ENCODE measurements at regions of chr1 and their contacts with region 1.

Region 1: GRCh38 chr1:21517161-21517589 is 8.0 kb downstream of the ALPL start:
- DNase-seq: no peak
- H3K4me3 ChIP-seq: no peak overlapping the region
- H3K27ac ChIP-seq: no peak overlapping the region
- H3K4me1 ChIP-seq: peaks cover 0 to 5% of the 10 kb centered on the region in 2 donors
- H3K27me3 ChIP-seq: no peaks in the 10 kb centered on the region
- CTCF ChIP-seq: no peak
- POLR2A ChIP-seq: no peak

Region 2: DNA sequence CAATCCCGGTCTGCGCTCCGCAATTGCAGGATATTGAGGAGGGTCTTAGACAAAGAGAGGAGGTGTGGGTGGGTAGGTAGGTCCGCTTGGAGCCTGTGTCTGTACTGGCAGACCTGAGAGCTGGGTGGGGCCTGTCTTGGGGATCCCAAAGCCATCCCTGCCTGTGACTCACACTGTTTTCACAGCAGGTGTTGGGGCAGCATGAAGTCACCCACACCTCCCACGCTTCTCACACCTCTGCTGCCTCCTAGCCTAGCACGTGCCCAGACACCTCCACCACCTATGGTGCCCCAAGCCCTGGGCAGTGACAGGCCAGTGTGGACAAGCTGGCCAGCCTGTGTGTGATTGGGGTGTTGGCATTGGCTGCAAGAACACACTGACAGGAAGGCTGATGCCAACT is 161.2 kb before region 1 on chr1:
- intact Hi-C with region 1: no loop called
- DNase-seq: no peak
- H3K4me3 ChIP-seq: no peak overlapping the region
- H3K27ac ChIP-seq: no peak overlapping the region
- H3K4me1 ChIP-seq: no peaks in the 10 kb centered on the region
- H3K27me3 ChIP-seq: no peaks in the 10 kb centered on the region
- CTCF ChIP-seq: no peak
- POLR2A ChIP-seq: no peak

Region 3: DNA sequence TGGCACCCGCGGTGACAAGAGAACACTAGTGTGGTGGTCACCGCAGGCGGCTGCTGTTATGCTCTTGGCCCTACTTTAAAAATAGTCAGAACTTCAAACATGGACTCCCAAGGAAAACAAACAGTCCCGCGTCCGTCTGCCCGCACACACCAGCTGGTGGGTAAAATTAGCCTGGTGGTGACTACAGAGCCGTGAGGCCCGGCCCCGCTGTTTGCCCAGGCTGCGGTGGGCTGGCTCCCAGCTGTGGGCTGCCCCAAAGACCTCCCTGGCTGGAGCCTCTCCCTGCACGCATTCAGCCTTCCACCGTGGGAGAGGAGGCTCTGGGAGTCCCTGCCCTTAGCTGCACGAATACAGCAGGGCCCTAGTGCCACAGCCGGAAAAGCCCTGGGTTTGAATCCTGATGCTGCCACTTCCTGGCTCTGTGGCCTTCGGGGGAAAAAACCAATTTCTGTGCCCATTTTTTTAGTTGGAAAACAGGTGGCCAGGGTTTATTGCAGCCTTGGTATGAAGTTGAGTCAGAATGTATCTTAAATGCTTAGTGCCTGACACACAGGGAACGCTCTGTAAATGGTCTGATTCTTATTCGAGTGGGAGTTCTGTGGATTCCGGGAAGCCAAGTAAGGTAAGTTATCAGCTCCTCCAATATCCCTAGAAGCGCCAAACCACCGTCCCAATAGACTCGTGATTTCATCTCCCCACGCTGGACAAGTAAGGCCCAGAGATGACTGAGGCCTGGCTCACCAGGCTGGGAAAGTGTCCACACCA is 50.2 kb after region 1 on chr1:
- intact Hi-C with region 1: no loop called
- DNase-seq: no peak
- H3K4me3 ChIP-seq: no peak overlapping the region
- H3K27ac ChIP-seq: no peak overlapping the region
- H3K4me1 ChIP-seq: peaks cover 12 to 13% of the 10 kb centered on the region in 2 donors
- H3K27me3 ChIP-seq: no peaks in the 10 kb centered on the region
- CTCF ChIP-seq: no peak
- POLR2A ChIP-seq: no peak

Region 4: DNA sequence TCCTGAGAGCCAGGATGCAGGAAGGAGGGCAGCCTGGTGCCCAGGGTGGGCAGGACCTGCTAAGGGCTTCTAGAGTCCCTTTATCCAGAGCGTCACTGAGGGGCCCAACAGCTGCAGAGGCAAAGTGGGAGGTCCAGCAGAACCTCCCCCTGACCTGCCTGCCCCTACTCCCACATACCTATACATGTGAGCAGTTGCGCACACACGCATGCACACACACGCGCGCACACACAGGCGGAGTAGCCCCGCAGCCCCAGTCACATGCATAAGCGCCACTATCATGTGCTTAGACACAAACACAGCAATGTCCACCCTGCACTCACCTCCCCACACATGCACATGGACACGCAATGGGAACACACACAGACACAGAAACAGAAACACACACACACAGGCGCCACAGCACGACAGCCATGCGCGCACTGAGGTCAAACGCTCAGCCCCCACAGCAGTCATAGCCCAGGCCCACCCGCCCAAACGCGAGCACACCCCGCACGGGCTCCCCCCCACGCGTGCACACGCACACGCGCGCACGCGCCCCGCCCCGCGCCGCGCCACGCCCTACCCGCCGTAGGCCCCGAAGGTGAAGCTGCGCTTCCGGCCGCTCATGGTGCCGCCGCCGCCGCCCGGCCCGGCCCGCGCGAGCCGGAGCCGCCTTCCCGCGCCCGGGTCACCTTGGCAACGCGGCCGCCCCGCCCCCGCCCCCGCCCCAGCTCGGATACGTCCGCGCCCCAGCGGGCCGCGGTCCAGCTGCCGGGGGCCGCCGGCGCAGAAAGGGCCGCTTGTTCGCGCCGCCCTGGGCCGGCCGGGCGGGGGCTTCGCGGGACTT is 134.3 kb after region 1 on chr1:
- intact Hi-C with region 1: loop called (anchors 5 to 10 kb)
- DNase-seq: peak in 1 of 7 donors; percentile 65
- H3K4me3 ChIP-seq: peak overlapping the region in 1 of 4 donors; percentile 63
- H3K27ac ChIP-seq: peak overlapping the region in 3 of 5 donors; percentile 7 to 78 (median 68)
- H3K4me1 ChIP-seq: peaks cover 6 to 20% of the 10 kb centered on the region in 2 donors
- H3K27me3 ChIP-seq: no peaks in the 10 kb centered on the region
- CTCF ChIP-seq: no peak
- POLR2A ChIP-seq: no peak

Measured in adrenal gland (tissue), 19 donors.